H1 (cell line): ENCODE measurements at regions of chr4 and their contacts with region 1.

Region 1: GRCh38 chr4:10116580-10117358 is at the start of gene WDR1:
- DNase-seq: peak; percentile 77 to 88
- H3K4me3 ChIP-seq: peak within 1 kb of the TSS; percentile 77 to 99 (median 88)
- H3K27ac ChIP-seq: peak within 1 kb of the TSS; percentile 96
- H3K4me1 ChIP-seq: peaks cover 17 to 34% (median 18%) of the 10 kb centered on the region in 4 experiments
- H3K27me3 ChIP-seq: no peaks in the 10 kb centered on the region
- CTCF ChIP-seq: no peak
- EP300 ChIP-seq: peak in 1 of 2 experiments; percentile 13; a peak in 1 of 3 replicates
- POLR2A ChIP-seq: peak in 1 of 2 experiments; percentile 88; a peak in 1 of 3 replicates
- RAD21 ChIP-seq: no peak
- total RNA-seq, gene WDR1: 315 and 339 TPM in 2 replicates

Region 2: DNA sequence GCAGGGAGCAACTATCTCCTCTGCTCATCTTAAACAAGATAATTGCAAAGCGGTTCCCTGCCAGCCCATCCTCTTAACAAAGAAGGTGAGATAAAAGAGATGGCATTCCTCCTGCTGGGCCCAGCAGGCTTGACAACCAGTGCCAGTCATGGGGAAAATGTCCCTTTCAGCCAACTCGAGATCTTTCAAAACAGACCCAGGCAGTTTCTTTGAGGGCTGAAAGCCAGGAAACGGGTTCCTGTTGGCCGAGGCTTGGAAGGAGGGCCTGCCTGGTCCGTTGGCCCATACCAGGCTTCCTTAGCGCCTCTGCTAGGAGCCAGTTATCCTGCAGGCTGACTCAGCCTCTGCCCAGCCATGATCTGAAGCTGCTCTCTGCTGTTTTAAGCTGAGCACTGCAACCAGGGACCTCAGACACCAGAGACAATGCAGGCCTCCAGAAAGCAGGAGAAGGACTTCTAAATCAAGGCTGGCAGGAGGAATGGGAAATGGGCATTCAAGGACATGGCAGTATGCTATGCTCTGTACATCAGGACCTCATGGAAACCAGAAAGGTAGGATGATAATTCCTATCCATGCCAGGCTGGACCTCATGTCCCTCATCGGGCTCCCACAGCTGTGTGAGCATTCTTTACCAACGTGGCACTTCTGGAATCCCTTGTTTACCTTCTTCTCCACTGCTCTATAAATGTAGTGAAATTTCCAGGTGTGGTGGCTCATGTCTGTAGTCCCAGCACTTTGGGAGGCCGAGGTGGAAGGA is 53.0 kb before region 1 on chr4:
- CTCF ChIA-PET with region 1: interaction called, 3 read pairs
- POLR2A ChIA-PET with region 1: interaction called, 18 read pairs
- DNase-seq: peak; percentile 62 to 71
- H3K4me3 ChIP-seq: no peak overlapping the region
- H3K27ac ChIP-seq: no peak overlapping the region
- H3K4me1 ChIP-seq: peaks cover 0 to 10% (median 3%) of the 10 kb centered on the region in 4 experiments; a peak in 4 of 7 replicates
- H3K27me3 ChIP-seq: no peaks in the 10 kb centered on the region
- CTCF ChIP-seq: peak; percentile 52 to 87 (median 69)
- EP300 ChIP-seq: peak in 1 of 2 experiments; percentile 63; a peak in 1 of 3 replicates
- POLR2A ChIP-seq: no peak
- RAD21 ChIP-seq: peak; percentile 83 to 87

Region 3: GRCh38 chr4:10083861-10084641 is 32.7 kb before region 1 on chr4:
- CTCF ChIA-PET with region 1: no interaction called
- POLR2A ChIA-PET with region 1: interaction called, 197 read pairs
- DNase-seq: no peak
- H3K4me3 ChIP-seq: no peak overlapping the region
- H3K27ac ChIP-seq: no peak overlapping the region
- H3K4me1 ChIP-seq: no peaks in the 10 kb centered on the region
- H3K27me3 ChIP-seq: no peaks in the 10 kb centered on the region
- CTCF ChIP-seq: no peak
- EP300 ChIP-seq: no peak
- POLR2A ChIP-seq: no peak
- RAD21 ChIP-seq: no peak

Region 4: GRCh38 chr4:10106421-10107039 is 10.2 kb before region 1 on chr4:
- CTCF ChIA-PET with region 1: interaction called, 3 read pairs
- POLR2A ChIA-PET with region 1: interaction called, 140 read pairs
- DNase-seq: no peak
- H3K4me3 ChIP-seq: no peak overlapping the region
- H3K27ac ChIP-seq: no peak overlapping the region
- H3K4me1 ChIP-seq: peaks cover 0 to 54% (median 23%) of the 10 kb centered on the region in 4 experiments; a peak in 6 of 7 replicates
- H3K27me3 ChIP-seq: no peaks in the 10 kb centered on the region
- CTCF ChIP-seq: no peak
- EP300 ChIP-seq: no peak
- POLR2A ChIP-seq: peak in 1 of 2 experiments; percentile 40; a peak in 1 of 3 replicates
- RAD21 ChIP-seq: no peak

Region 5: GRCh38 chr4:10140866-10141759 is 24.3 kb after region 1 on chr4:
- CTCF ChIA-PET with region 1: interaction called, 22 read pairs
- POLR2A ChIA-PET with region 1: interaction called, 24 read pairs
- DNase-seq: peak in 1 of 2 experiments; percentile 68
- H3K4me3 ChIP-seq: peak overlapping the region in 1 of 4 experiments; percentile 23; a peak in 1 of 8 replicates
- H3K27ac ChIP-seq: no peak overlapping the region
- H3K4me1 ChIP-seq: no peaks in the 10 kb centered on the region
- H3K27me3 ChIP-seq: peaks cover 0 to 8% (median 0%) of the 10 kb centered on the region in 4 experiments; a peak in 2 of 7 replicates
- CTCF ChIP-seq: peak; percentile 72 to 81 (median 79)
- EP300 ChIP-seq: no peak
- POLR2A ChIP-seq: no peak
- RAD21 ChIP-seq: peak; percentile 74

Region 6: GRCh38 chr4:10157478-10158332 is 40.9 kb after region 1 on chr4:
- CTCF ChIA-PET with region 1: interaction called, 3 read pairs
- POLR2A ChIA-PET with region 1: interaction called, 10 read pairs
- DNase-seq: peak; percentile 39 to 62
- H3K4me3 ChIP-seq: no peak overlapping the region
- H3K27ac ChIP-seq: no peak overlapping the region
- H3K4me1 ChIP-seq: peaks cover 0 to 5% (median 0%) of the 10 kb centered on the region in 4 experiments; a peak in 1 of 7 replicates
- H3K27me3 ChIP-seq: no peaks in the 10 kb centered on the region; a peak in 4 of 7 replicates
- CTCF ChIP-seq: peak; percentile 52 to 86 (median 73)
- EP300 ChIP-seq: no peak
- POLR2A ChIP-seq: no peak
- RAD21 ChIP-seq: peak; percentile 86 to 88